Dorsolateral prefrontal cortex (tissue), 120 donors: ENCODE measurements at regions of chr12 and their contacts with region 1.

Region 1: GRCh38 chr12:27747111-27747820 is 32.8 kb upstream of the KLHL42 start:
- DNase-seq: no peak
- H3K4me3 ChIP-seq: no peak overlapping the region
- H3K27ac ChIP-seq: peak overlapping the region in 7 of 59 donors; percentile 0 to 68 (median 29)
- H3K27me3 ChIP-seq: no peaks in the 10 kb centered on the region
- CTCF ChIP-seq: no peak

Region 2: GRCh38 chr12:27807063-27807703 is 59.9 kb after region 1 on chr12:
- intact Hi-C with region 1: loop called in 1 of 2 experiments (anchors 10 kb)
- DNase-seq: no peak
- H3K4me3 ChIP-seq: no peak overlapping the region
- H3K27ac ChIP-seq: no peak overlapping the region
- H3K27me3 ChIP-seq: no peaks in the 10 kb centered on the region
- CTCF ChIP-seq: no peak

Region 3: DNA sequence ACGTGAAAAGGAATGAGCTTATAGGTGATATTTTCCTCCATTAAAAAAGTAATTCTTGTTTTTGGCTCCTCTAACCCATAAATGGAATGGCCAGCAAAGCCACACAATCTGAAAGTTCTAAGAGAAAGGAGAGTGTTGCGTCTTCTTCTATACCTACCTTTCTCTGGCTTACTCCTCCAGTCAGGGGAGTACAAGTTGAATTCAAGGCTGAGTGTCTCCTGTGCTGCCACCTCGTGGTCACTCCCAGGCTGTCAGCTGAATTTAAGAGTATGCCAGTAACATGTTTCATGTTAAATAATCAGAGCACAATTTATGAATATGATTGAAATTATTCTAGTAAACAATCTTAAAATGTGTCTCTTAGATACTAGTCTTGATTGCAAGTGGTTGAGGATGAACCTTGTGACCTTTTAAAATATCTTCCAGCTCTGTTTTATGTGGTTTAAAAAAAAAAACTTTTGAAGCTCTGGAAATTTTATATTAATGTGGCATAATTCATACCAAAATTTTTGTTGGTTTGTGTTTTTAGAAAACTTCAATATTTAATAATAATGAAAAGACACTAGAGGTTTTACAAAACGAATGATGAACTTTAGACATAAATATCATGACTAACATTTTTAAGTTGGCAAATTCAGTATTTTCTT is 193.6 kb after region 1 on chr12:
- intact Hi-C with region 1: loop called in 1 of 2 experiments (anchors 10 kb)
- DNase-seq: peak; percentile 53 to 81 (median 70)
- H3K4me3 ChIP-seq: no peak overlapping the region
- H3K27ac ChIP-seq: no peak overlapping the region
- H3K27me3 ChIP-seq: peaks cover 0 to 5% (median 0%) of the 10 kb centered on the region in 45 donors
- CTCF ChIP-seq: peak; percentile 43 to 87 (median 76)